Activated naive CD4-positive, alpha-beta T cell treated with anti-CD3 and anti-CD28 coated beads for 36 hours (primary cell): ENCODE measurements at regions of chr5 and their contacts with region 1.

Region 1: GRCh38 chr5:138464008-138464387 is 1.3 kb upstream of the EGR1 start:
- DNase-seq: peak; percentile 95
- H3K4me3 Mint-ChIP-seq: peak overlapping the region; percentile 83
- H3K27ac Mint-ChIP-seq: peak overlapping the region; percentile 93
- H3K4me1 Mint-ChIP-seq: peaks cover 59% of the 10 kb centered on the region
- H3K27me3 Mint-ChIP-seq: no peaks in the 10 kb centered on the region

Region 2: GRCh38 chr5:138178516-138179276 is 285.3 kb before region 1 on chr5 and contains the starts of genes BRD8 and KIF20A:
- CTCF ChIA-PET with region 1: no interaction called
- intact Hi-C with region 1: loop called (anchors 1 kb)
- DNase-seq: peak; percentile 98
- H3K4me3 Mint-ChIP-seq: no peak within 1 kb of the TSS
- H3K27ac Mint-ChIP-seq: peak within 1 kb of the TSS; percentile 63
- H3K4me1 Mint-ChIP-seq: peaks cover 12% of the 10 kb centered on the region
- H3K27me3 Mint-ChIP-seq: no peaks in the 10 kb centered on the region
- total RNA-seq, gene BRD8: 94.8 to 95.6 TPM
- total RNA-seq, gene KIF20A: 78.9 to 81.9 TPM

Region 3: GRCh38 chr5:138337685-138338410 is 126.2 kb before region 1 on chr5 and contains the start of gene FAM53C:
- CTCF ChIA-PET with region 1: interaction called, 3 read pairs
- intact Hi-C with region 1: loop called (anchors 1 kb)
- DNase-seq: peak; percentile 91
- H3K4me3 Mint-ChIP-seq: peak within 1 kb of the TSS; percentile 87
- H3K27ac Mint-ChIP-seq: peak within 1 kb of the TSS; percentile 98
- H3K4me1 Mint-ChIP-seq: peaks cover 27% of the 10 kb centered on the region
- H3K27me3 Mint-ChIP-seq: no peaks in the 10 kb centered on the region
- total RNA-seq, gene FAM53C: 20.7 to 21.8 TPM

Region 4: GRCh38 chr5:138449501-138450239 is 14.3 kb before region 1 on chr5:
- CTCF ChIA-PET with region 1: interaction called, 53 read pairs
- intact Hi-C with region 1: no loop called
- DNase-seq: peak; percentile 89
- H3K4me3 Mint-ChIP-seq: peak overlapping the region; percentile 34
- H3K27ac Mint-ChIP-seq: no peak overlapping the region
- H3K4me1 Mint-ChIP-seq: peaks cover 6% of the 10 kb centered on the region
- H3K27me3 Mint-ChIP-seq: peaks cover 1% of the 10 kb centered on the region

Region 5: DNA sequence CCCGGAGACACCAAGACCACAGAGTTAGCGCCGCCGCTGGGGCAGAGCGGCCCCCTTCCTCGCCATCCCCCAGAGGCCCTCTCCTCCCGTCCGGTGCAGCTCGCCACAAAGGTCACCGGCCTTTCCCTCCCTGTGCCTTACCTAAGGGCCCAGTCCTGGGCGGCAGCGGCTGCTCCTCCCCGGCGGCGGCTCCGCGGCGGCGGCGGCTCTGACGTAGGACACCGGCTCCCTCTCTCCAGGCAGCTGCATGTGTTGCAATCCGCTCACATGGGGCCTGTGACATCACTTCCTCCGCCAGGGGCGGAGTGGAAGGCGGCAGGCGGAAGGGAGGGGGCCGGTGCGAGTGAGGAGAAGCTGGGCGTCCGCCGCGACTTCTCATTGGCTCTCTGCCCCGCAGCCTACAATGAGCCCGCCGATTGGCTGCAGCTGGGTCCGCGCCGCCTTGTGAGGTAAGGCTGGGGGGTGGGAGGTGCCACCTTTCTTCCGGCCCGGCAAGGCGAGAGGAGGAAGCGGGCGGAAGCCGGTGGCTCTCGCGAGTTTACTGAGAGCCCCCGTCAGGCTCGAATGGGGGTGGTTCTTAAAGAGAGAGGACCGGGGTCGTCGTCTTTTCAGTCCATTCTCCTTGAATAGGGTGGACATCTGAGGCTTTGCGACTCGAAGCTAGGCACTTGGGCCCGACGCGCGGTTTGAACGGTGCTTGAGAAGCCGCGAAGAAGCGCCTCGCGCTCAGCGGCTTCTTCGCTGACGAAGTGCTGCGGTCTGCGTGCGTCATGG is 79.1 kb after region 1 on chr5 and contains the start of gene ETF1:
- CTCF ChIA-PET with region 1: interaction called, 8 read pairs
- intact Hi-C with region 1: loop called (anchors 1 kb)
- DNase-seq: peak; percentile 100
- H3K4me3 Mint-ChIP-seq: peak within 1 kb of the TSS; percentile 100
- H3K27ac Mint-ChIP-seq: peak within 1 kb of the TSS; percentile 100
- H3K4me1 Mint-ChIP-seq: peaks cover 71% of the 10 kb centered on the region
- H3K27me3 Mint-ChIP-seq: no peaks in the 10 kb centered on the region
- total RNA-seq, gene ETF1: 99.8 to 107 TPM

Region 6: DNA sequence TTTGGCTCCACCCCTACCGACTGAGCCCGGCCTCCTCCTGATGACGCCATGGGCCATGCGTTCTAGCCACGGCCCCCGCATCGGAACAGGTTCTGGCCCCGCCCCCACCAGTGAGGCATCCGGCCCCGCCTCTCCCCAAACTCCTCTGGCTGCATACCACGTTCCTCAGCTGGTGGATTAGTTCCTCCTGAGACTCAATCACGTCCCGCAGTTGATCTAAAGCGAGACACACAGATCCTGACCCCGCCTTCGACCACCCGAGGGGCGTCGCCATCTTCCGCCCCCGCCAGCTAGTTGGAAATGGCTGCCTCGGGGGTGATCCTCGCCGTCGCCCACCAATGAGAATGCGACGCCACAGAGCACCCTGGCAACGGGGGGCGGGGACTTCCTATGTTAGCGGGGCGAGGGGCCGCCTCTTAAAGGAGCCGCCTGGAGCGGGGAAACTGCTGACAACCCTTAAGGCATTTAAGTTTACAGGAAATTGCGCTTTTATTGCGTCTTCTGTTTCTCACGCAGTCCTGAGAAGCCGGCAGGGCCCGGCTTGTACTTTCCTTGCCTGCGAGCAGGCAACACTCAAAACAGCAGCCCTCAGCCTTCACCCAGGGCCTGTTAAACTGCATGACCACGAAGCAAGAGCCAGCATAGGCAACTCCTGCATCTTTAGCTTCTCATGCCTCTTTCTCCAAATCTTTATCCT is 939.9 kb after region 1 on chr5 and contains the start of gene SPATA24:
- CTCF ChIA-PET with region 1: no interaction called
- intact Hi-C with region 1: loop called (anchors 5 kb)
- DNase-seq: peak; percentile 99
- H3K4me3 Mint-ChIP-seq: peak within 1 kb of the TSS; percentile 93
- H3K27ac Mint-ChIP-seq: peak within 1 kb of the TSS; percentile 100
- H3K4me1 Mint-ChIP-seq: peaks cover 37% of the 10 kb centered on the region
- H3K27me3 Mint-ChIP-seq: no peaks in the 10 kb centered on the region
- total RNA-seq, gene SPATA24: 6.0 to 7.4 TPM